ENCODE measurements at regions of chr10 and their contacts with region 1.

Region 1: GRCh38 chr10:79413966-79414300 is 31.5 kb downstream of the ZCCHC24 start:
- DNase-seq: no peak
- H3K4me3 Mint-ChIP-seq: no peak overlapping the region
- H3K27ac Mint-ChIP-seq: no peak overlapping the region
- H3K4me1 Mint-ChIP-seq: peaks cover 3% of the 10 kb centered on the region
- H3K27me3 Mint-ChIP-seq: no peaks in the 10 kb centered on the region

Region 2: DNA sequence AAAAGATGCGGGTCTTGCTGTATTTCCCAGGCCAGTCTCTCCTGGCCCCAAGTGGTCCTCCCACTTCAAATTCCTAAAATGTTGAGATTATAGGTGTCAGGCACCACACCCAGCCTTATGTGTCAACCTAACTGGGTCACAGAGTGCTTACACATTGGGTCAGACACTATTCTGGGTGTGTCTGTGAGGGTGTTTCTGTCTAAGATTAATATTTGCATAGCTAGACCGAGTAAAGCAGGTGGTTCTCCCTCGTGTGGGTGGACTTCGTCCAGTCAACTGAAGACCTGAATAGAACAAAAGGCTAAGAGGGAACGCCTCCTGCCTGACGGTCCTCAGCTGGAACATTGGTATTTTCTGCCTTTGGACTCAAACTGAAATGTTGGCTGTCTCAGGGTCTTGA is 55.1 kb before region 1 on chr10:
- CTCF ChIA-PET with region 1: no interaction called
- POLR2A ChIA-PET with region 1: no interaction called
- DNase-seq: no peak
- H3K4me3 Mint-ChIP-seq: no peak overlapping the region
- H3K27ac Mint-ChIP-seq: no peak overlapping the region
- H3K4me1 Mint-ChIP-seq: peaks cover 24% of the 10 kb centered on the region
- H3K27me3 Mint-ChIP-seq: peaks cover 11% of the 10 kb centered on the region

Region 3: GRCh38 chr10:79374312-79375191 is 39.4 kb before region 1 on chr10:
- CTCF ChIA-PET with region 1: no interaction called
- POLR2A ChIA-PET with region 1: no interaction called
- DNase-seq: peak; percentile 77
- H3K4me3 Mint-ChIP-seq: no peak overlapping the region
- H3K27ac Mint-ChIP-seq: no peak overlapping the region
- H3K4me1 Mint-ChIP-seq: peaks cover 2% of the 10 kb centered on the region
- H3K27me3 Mint-ChIP-seq: peaks cover 9% of the 10 kb centered on the region

Region 4: DNA sequence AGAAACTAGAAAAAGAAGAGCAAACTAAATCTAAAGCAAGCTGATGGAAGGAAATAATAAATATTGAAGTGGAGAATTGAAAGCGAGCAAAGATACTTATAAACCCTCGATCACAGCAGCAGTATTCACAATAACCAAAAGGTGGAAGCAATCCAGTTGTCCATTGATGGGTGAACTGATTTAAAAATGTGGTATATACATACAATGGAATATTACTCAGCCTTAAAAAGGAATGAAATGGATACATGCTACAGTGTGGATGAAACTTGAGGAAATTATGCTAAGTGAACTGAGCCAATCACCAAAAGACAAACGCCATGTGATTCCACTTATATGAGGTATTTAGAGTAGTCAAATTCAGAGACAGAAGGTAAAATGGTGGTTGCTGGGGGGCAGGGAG is 14.0 kb after region 1 on chr10:
- CTCF ChIA-PET with region 1: interaction called, 10 read pairs
- POLR2A ChIA-PET with region 1: no interaction called
- DNase-seq: no peak
- H3K4me3 Mint-ChIP-seq: no peak overlapping the region
- H3K27ac Mint-ChIP-seq: no peak overlapping the region
- H3K4me1 Mint-ChIP-seq: no peaks in the 10 kb centered on the region
- H3K27me3 Mint-ChIP-seq: peaks cover 10% of the 10 kb centered on the region

Region 5: DNA sequence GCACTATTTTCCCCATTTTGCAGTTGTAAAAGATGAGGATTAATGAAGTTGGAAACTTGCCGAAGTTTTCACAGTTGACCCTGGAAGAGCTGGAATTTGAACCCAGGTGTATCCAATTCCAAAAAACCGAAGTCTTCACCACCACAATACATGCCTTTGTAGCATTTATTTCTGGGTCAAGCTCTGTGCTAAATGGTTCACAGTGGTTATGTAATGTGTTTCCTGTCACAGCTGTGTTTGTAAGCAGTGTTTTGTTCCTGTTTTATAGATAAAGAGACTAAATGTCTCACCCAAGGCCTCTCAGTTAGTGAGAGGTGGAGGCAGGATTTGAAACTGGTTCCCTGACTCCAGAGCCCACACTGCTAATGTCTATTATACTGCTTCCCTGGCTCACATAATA is 128.7 kb after region 1 on chr10:
- CTCF ChIA-PET with region 1: no interaction called
- POLR2A ChIA-PET with region 1: no interaction called
- DNase-seq: no peak
- H3K4me3 Mint-ChIP-seq: no peak overlapping the region
- H3K27ac Mint-ChIP-seq: no peak overlapping the region
- H3K4me1 Mint-ChIP-seq: peaks cover 34% of the 10 kb centered on the region
- H3K27me3 Mint-ChIP-seq: no peaks in the 10 kb centered on the region

Measured in activated CD4-positive, alpha-beta T cell treated with anti-CD3 and anti-CD28 coated beads, Interleukin-2, amount 10 ng/mL, durations not matched to agents 7 days and 5 days (primary cell).